PC-9 (cell line): ENCODE measurements at regions of chr18 and their contacts with region 1.

Region 1: GRCh38 chr18:59950215-59950944 is 50.6 kb downstream of the PMAIP1 start:
- DNase-seq: no peak
- H3K4me3 ChIP-seq: no peak overlapping the region
- H3K27ac ChIP-seq: peak overlapping the region; percentile 91; the same call in 1 of the 2 replicates
- H3K4me1 ChIP-seq: peaks cover 50% of the 10 kb centered on the region
- H3K27me3 ChIP-seq: no peaks in the 10 kb centered on the region
- CTCF ChIP-seq: no peak

Region 2: DNA sequence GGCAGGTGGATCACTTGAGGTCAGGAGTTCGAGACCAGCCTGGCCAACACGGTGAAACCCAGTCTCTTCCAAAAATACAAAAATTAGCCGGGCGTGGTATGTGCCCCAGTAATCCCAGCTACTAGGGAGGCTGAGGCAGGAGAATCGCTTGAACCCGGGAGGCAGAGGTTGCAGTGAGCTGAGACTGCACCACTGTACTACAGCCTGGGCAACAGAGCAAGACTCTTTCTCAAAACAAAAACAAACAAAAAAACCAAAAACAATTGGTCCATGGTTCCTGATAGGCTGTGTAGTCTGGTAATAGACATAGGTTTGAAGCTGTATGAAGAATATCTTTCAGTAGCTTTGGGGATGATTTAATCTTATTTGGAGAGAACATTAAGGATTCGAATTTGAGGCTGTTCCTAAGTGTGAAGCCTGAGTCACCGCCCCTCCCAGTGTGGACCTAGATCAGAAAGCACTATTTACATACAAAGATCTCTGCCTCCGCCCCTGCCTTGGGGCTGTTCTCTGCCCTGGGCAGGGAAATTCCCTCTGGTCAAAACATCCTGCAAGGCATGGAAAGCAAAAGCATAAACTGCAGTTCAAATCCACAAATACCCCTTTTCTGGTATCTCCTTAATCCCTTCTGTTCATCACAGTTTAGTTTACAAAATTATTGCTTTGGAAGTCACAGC is 103.4 kb before region 1 on chr18:
- CTCF ChIA-PET with region 1: interaction called, 11 read pairs
- POLR2A ChIA-PET with region 1: no interaction called
- intact Hi-C with region 1: no loop called
- DNase-seq: peak; percentile 61 to 70
- H3K4me3 ChIP-seq: no peak overlapping the region
- H3K27ac ChIP-seq: no peak overlapping the region
- H3K4me1 ChIP-seq: peaks cover 34% of the 10 kb centered on the region
- H3K27me3 ChIP-seq: no peaks in the 10 kb centered on the region
- CTCF ChIP-seq: no peak

Region 3: DNA sequence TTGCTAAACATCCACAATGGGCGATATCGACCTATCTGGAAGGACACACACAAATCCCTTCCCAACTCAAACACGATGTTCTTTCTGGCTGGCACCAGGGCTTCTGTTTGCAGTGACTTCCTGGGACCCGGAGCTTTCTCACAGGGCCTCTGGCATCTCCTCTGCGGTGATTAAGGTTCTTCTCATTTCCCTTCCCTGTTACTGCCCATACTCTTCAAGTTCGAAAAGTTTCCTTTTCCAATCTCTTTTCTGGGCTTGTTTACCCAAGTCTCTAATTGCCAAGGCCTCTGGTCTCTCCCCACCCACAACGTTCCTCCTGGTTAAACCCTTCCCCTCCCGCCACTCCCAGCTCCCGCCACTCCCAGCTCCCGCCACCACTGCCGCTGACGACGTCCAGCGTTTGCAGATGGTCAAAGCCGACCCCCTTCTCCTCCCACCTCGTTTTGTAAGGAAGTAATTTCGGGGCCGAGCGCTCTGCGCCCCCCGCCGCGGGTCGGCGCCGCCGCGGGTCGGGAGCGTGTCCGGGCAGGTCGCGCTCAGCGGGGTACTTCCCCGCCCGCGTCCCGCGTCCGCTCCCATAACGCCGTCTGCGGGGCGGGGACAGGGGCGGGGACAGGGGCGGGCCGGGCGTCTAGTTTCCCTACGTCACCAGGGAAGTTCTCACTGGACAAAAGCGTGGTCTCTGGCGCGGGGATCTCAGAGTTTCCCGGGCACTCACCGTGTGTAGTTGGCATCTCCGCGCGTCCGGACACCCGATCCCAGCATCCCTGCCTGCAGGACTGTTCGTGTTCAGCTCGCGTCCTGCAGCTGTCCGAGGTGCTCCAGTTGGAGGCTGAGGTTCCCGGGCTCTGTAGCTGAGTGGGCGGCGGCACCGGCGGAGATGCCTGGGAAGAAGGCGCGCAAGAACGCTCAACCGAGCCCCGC is 50.8 kb before region 1 on chr18 and contains the start of gene PMAIP1:
- CTCF ChIA-PET with region 1: no interaction called
- POLR2A ChIA-PET with region 1: interaction called, 7 read pairs
- intact Hi-C with region 1: loop called (anchors 2 kb)
- DNase-seq: peak; percentile 82 to 88
- H3K4me3 ChIP-seq: peak within 1 kb of the TSS; percentile 90
- H3K27ac ChIP-seq: peak within 1 kb of the TSS; percentile 92
- H3K4me1 ChIP-seq: peaks cover 43% of the 10 kb centered on the region
- H3K27me3 ChIP-seq: no peaks in the 10 kb centered on the region
- CTCF ChIP-seq: no peak
- total RNA-seq, gene PMAIP1: 16.5 and 17.0 TPM in 2 replicates

Region 4: DNA sequence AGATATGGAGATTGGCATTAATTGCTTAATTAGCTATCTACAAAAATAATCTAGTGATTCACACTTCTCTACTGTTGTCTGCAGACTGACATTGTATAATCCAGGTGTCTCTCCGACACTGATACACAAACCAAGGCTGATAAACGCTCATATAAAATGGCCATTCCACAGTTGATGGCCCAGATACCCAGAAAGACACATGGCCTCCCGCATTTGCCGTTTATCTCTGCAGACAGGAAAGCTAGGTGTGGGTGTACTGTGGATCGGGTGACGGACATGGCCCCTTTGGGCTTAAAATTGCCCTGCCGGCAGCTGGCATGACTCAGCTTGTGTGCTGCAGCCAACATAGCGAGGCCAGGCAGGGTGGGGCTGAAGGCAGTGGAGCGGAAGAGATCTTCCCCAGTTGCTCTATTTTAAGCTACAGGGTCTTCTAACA is 32.0 kb before region 1 on chr18:
- CTCF ChIA-PET with region 1: interaction called, 4 read pairs
- POLR2A ChIA-PET with region 1: interaction called, 8 read pairs
- intact Hi-C with region 1: loop called (anchors 1 kb)
- DNase-seq: peak; percentile 86 to 94
- H3K4me3 ChIP-seq: peak overlapping the region; percentile 20; the same call in 1 of the 2 replicates
- H3K27ac ChIP-seq: peak overlapping the region; percentile 94
- H3K4me1 ChIP-seq: peaks cover 76% of the 10 kb centered on the region
- H3K27me3 ChIP-seq: no peaks in the 10 kb centered on the region
- CTCF ChIP-seq: no peak

Region 5: DNA sequence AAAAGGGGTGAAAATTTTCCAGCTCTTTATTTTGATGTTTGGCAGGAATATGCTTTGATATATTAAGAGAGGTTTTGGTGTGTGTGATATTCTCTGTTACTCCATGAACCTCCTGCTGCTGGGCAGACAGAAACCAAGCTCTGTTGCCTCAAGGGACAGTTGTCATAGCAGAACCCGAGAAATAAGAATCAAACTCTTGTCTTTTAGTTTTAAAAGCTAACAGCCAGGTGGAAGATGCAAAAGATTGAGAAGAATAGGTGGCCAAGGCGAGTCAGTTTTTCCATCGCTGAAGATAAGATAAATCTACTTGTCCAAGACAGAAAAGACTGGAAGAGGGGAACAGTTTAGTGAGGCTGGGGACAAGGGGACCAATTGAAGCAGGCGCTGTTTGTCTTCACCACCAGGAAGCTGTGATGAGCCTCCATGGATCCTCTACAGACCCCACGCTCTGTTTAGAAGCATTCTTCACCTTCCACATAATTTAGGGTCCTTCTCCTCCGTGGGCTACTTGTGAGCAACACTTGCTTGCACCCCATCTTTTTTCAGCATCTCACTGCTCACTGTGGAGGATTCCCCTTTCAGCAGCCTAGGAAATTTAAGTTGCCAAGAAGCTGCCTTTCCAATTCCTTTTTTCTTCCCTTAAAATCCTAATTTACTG is 26.7 kb before region 1 on chr18:
- CTCF ChIA-PET with region 1: interaction called, 4 read pairs
- POLR2A ChIA-PET with region 1: interaction called, 8 read pairs
- intact Hi-C with region 1: loop called (anchors 1 kb)
- DNase-seq: no peak
- H3K4me3 ChIP-seq: peak overlapping the region; percentile 7; the same call in 1 of the 2 replicates
- H3K27ac ChIP-seq: peak overlapping the region; percentile 89
- H3K4me1 ChIP-seq: peaks cover 59% of the 10 kb centered on the region
- H3K27me3 ChIP-seq: no peaks in the 10 kb centered on the region
- CTCF ChIP-seq: no peak

Region 6: GRCh38 chr18:60809937-60810336 is 859.6 kb after region 1 on chr18:
- CTCF ChIA-PET with region 1: no interaction called
- POLR2A ChIA-PET with region 1: interaction called, 10 read pairs
- intact Hi-C with region 1: no loop called
- DNase-seq: no peak
- H3K4me3 ChIP-seq: no peak overlapping the region
- H3K27ac ChIP-seq: no peak overlapping the region
- H3K4me1 ChIP-seq: no peaks in the 10 kb centered on the region
- H3K27me3 ChIP-seq: no peaks in the 10 kb centered on the region
- CTCF ChIP-seq: no peak